ENCODE measurements at regions of chr7 and their contacts with region 1.

Region 1: GRCh38 chr7:149742075-149742701 is 31.2 kb downstream of the ZNF467 start:
- DNase-seq: peak; percentile 75
- H3K4me3 ChIP-seq: peak overlapping the region; percentile 22
- H3K27ac ChIP-seq: no peak overlapping the region
- H3K4me1 ChIP-seq: peaks cover 4% of the 10 kb centered on the region
- H3K27me3 ChIP-seq: no peaks in the 10 kb centered on the region
- CTCF ChIP-seq: peak; percentile 93

Region 2: GRCh38 chr7:149662591-149663095 is 79.5 kb before region 1 on chr7:
- intact Hi-C with region 1: loop called (anchors 5 kb)
- DNase-seq: peak; percentile 77
- H3K4me3 ChIP-seq: no peak overlapping the region
- H3K27ac ChIP-seq: no peak overlapping the region
- H3K4me1 ChIP-seq: no peaks in the 10 kb centered on the region
- H3K27me3 ChIP-seq: no peaks in the 10 kb centered on the region
- CTCF ChIP-seq: peak; percentile 32

Measured in colonic mucosa (tissue), 4 donors.